GM10248 (cell line): ENCODE measurements at regions of chr9 and their contacts with region 1.

Region 1: GRCh38 chr9:136888454-136888853 is 2.1 kb downstream of the TRAF2 start:
- DNase-seq: no peak
- CTCF ChIP-seq: no peak

Region 2: DNA sequence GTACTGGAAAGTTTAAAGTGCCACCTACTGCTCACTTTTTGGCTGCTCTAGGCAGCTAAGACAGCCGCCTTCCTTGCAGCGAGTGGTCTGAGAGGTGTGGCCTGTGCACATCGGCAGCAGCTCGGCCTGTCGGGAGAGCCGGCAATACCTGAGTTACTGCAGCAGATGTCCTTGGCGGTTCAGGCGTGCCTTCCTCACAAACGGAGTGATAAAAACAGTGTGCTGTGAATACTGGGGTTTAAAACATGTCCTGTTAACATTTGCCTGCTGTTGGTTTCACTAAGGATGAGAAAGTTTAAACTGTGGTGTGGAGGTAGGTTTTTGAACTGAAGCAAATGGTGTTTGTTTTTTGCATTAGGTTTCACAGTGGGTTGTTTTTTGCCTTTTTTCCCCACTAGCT is 10.7 kb after region 1 on chr9:
- CTCF ChIA-PET with region 1: interaction called, 10 read pairs
- POLR2A ChIA-PET with region 1: interaction called, 8 read pairs
- DNase-seq: peak; percentile 54
- CTCF ChIP-seq: peak; percentile 28